CD8-positive, alpha-beta T cell (primary cell): ENCODE measurements at regions of chr19 and their contacts with region 1.

Region 1: GRCh38 chr19:44051654-44052402 is at the start of gene ZNF223:
- DNase-seq: peak; percentile 9 to 85 (median 68)
- ATAC-seq: peak; percentile 84
- H3K4me3 ChIP-seq: peak within 1 kb of the TSS; percentile 71 to 77
- H3K4me3 Mint-ChIP-seq: peak within 1 kb of the TSS; percentile 93
- H3K27ac ChIP-seq: peak within 1 kb of the TSS in 1 of 2 experiments; percentile 40
- H3K27ac Mint-ChIP-seq: peak within 1 kb of the TSS; percentile 85
- H3K4me1 ChIP-seq: peaks cover 11% of the 10 kb centered on the region
- H3K4me1 Mint-ChIP-seq: peaks cover 38% of the 10 kb centered on the region
- H3K27me3 ChIP-seq: no peaks in the 10 kb centered on the region
- H3K27me3 Mint-ChIP-seq: no peaks in the 10 kb centered on the region
- CTCF ChIP-seq: no peak
- total RNA-seq, gene ZNF223: 0.72 to 1.3 TPM

Region 2: GRCh38 chr19:43662487-43662886 is 389.3 kb before region 1 on chr19:
- CTCF ChIA-PET with region 1: no interaction called
- POLR2A ChIA-PET with region 1: no interaction called
- intact Hi-C with region 1: no loop called
- DNase-seq: no peak
- ATAC-seq: no peak
- H3K4me3 ChIP-seq: no peak overlapping the region
- H3K4me3 Mint-ChIP-seq: no peak overlapping the region
- H3K27ac ChIP-seq: no peak overlapping the region
- H3K27ac Mint-ChIP-seq: no peak overlapping the region
- H3K4me1 ChIP-seq: peaks cover 22% of the 10 kb centered on the region
- H3K4me1 Mint-ChIP-seq: peaks cover 19% of the 10 kb centered on the region
- H3K27me3 ChIP-seq: no peaks in the 10 kb centered on the region
- H3K27me3 Mint-ChIP-seq: no peaks in the 10 kb centered on the region
- CTCF ChIP-seq: no peak

Region 3: GRCh38 chr19:43711751-43712355 is 340.0 kb before region 1 on chr19:
- CTCF ChIA-PET with region 1: no interaction called
- POLR2A ChIA-PET with region 1: no interaction called
- intact Hi-C with region 1: no loop called
- DNase-seq: no peak
- ATAC-seq: no peak
- H3K4me3 ChIP-seq: no peak overlapping the region
- H3K4me3 Mint-ChIP-seq: no peak overlapping the region
- H3K27ac ChIP-seq: no peak overlapping the region
- H3K27ac Mint-ChIP-seq: no peak overlapping the region
- H3K4me1 ChIP-seq: no peaks in the 10 kb centered on the region
- H3K4me1 Mint-ChIP-seq: no peaks in the 10 kb centered on the region
- H3K27me3 ChIP-seq: peaks cover 0 to 2% of the 10 kb centered on the region in 2 experiments
- H3K27me3 Mint-ChIP-seq: peaks cover 16% of the 10 kb centered on the region
- CTCF ChIP-seq: no peak

Region 4: DNA sequence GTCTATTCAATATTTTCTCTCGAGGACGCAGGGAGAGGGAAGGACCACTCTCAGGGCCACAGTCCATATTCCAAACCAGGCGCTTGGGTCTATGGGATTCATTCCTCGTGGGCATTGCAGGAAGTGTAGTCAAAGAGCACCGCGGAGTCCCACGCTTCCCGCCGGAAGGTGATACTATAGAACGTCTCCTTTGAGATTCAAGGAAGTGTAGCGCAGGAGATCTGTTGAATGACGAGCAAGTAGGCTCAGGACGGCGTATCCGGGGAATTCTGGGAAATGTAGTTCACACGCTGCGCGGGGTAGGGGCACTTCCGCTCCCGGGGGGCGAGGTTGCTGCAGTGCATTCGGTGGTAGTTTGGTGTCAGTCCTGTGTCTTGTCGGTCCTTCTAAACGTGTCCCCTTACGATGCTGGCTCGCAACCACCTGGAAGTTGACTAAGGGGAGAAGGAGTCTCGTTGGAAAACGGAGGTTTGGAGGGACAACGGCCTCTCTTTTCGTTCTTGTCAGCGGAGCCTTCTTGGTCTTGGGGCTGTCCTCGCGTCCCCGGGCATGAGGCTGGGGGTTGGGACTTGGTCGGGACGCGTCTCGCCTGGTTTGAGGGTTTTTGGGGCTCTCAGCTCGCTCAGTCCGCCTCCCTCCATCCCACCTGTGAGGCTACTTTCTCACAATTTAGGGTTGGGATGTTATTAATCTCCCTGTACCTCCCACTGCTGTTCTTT is 20.2 kb after region 1 on chr19 and contains the start of gene ZNF284:
- CTCF ChIA-PET with region 1: no interaction called
- POLR2A ChIA-PET with region 1: no interaction called
- intact Hi-C with region 1: loop called in 1 of 2 experiments (anchors 1 kb)
- DNase-seq: peak; percentile 60 to 93 (median 83)
- ATAC-seq: peak; percentile 99
- H3K4me3 ChIP-seq: peak within 1 kb of the TSS; percentile 65 to 73
- H3K4me3 Mint-ChIP-seq: peak within 1 kb of the TSS; percentile 91
- H3K27ac ChIP-seq: peak within 1 kb of the TSS; percentile 2 to 59
- H3K27ac Mint-ChIP-seq: peak within 1 kb of the TSS; percentile 79
- H3K4me1 ChIP-seq: peaks cover 16% of the 10 kb centered on the region
- H3K4me1 Mint-ChIP-seq: peaks cover 36% of the 10 kb centered on the region
- H3K27me3 ChIP-seq: no peaks in the 10 kb centered on the region
- H3K27me3 Mint-ChIP-seq: no peaks in the 10 kb centered on the region
- CTCF ChIP-seq: no peak
- total RNA-seq, gene ZNF284: 0.64 to 1.2 TPM